ENCODE measurements at regions of chr12 and their contacts with region 1.

Region 1: DNA sequence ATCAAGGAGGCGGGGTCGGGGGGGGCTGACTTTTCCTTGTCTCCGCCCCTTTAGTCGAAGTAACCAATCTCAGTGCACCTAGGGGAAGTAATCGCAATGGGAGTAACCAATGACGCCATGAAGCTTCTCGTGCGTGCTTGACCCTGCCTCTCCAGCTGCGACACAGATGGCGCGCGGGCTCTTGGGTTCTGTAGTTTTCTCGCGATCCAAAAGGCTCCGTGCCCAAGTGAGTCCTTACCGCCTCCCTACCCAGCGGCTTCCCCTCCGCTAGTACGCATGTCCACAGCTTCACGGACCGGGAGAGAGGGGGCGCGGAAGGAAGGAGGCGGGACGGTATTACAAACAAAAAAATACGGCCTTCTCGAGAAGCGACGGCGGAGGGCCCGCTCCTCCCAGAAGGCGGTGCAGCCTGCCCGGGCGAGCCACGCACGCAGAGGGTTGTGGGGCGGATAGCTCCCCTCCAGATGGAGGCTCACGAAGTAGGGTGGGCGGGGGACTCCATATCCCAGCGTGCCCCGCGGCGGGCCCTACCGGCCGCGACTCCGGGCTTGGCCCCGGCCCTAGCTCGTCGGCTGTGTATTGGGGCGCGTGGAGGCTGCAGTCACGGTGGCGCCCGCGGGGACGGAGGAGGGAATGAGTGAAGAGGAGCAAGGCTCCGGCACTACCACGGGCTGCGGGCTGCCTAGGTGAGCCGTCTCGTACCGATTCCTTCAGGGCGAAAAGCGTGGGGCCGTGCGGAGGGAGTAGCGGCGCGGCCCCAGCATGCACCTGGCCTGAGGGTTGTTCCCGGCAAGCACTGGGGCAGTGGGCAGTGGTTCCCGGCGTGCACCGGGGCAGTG is at the start of gene TARBP2:
- DNase-seq: peak; percentile 97
- H3K4me3 Mint-ChIP-seq: peak within 1 kb of the TSS; percentile 81
- H3K27ac Mint-ChIP-seq: peak within 1 kb of the TSS; percentile 96
- H3K4me1 Mint-ChIP-seq: peaks cover 41% of the 10 kb centered on the region
- H3K27me3 Mint-ChIP-seq: no peaks in the 10 kb centered on the region
- total RNA-seq, gene TARBP2: 25.0 to 26.8 TPM

Region 2: GRCh38 chr12:53098982-53099651 is 401.9 kb before region 1 on chr12:
- CTCF ChIA-PET with region 1: no interaction called
- intact Hi-C with region 1: loop called (anchors 5 kb)
- DNase-seq: peak; percentile 95
- H3K4me3 Mint-ChIP-seq: peak overlapping the region; percentile 44
- H3K27ac Mint-ChIP-seq: no peak overlapping the region
- H3K4me1 Mint-ChIP-seq: peaks cover 40% of the 10 kb centered on the region
- H3K27me3 Mint-ChIP-seq: peaks cover 6% of the 10 kb centered on the region

Region 3: DNA sequence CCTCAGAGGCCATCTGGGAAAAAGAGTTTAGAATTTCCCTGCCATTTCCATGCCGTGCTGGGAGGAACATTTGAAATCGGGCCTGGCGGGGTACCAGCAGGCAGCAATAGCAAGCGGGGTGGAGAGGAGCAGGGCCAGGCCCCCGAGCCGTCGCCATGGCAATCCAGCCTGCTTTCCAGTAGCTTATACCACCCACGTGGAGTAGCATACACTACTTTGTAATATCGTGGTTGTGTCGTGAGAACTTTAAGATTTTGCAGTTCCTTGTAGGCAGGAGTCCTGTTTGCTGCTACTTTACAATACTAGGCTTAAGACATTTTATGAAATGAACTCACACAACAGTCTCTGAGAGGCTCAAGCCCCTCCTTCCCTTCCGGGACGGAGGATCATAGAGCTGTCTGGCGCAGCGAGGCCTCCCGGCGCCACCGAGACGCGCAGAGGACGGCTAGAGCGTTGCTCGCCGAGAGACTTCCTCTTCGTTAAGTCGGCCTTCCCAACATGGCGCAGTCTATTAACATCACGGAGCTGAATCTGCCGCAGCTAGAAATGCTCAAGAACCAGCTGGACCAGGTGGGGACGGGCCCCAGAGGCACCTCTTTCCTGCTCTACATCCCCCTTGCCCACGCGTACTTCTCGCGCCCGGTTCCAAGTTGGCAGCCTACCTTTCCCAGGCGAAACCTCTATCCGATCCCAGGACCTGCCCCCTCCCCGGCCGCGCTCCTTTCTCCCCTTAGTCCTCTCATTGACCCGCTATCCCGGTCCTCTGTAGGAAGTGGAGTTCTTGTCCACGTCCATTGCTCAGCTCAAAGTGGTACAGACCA is 205.7 kb before region 1 on chr12 and contains the start of gene PFDN5:
- CTCF ChIA-PET with region 1: no interaction called
- intact Hi-C with region 1: loop called (anchors 1 kb)
- DNase-seq: peak; percentile 94
- H3K4me3 Mint-ChIP-seq: peak within 1 kb of the TSS; percentile 98
- H3K27ac Mint-ChIP-seq: peak within 1 kb of the TSS; percentile 95
- H3K4me1 Mint-ChIP-seq: peaks cover 53% of the 10 kb centered on the region
- H3K27me3 Mint-ChIP-seq: no peaks in the 10 kb centered on the region
- total RNA-seq, gene PFDN5: 376 to 383 TPM

Region 4: GRCh38 chr12:53414756-53415417 is 86.1 kb before region 1 on chr12:
- CTCF ChIA-PET with region 1: no interaction called
- intact Hi-C with region 1: loop called (anchors 2 kb)
- DNase-seq: no peak
- H3K4me3 Mint-ChIP-seq: no peak overlapping the region
- H3K27ac Mint-ChIP-seq: no peak overlapping the region
- H3K4me1 Mint-ChIP-seq: peaks cover 74% of the 10 kb centered on the region
- H3K27me3 Mint-ChIP-seq: no peaks in the 10 kb centered on the region

Region 5: DNA sequence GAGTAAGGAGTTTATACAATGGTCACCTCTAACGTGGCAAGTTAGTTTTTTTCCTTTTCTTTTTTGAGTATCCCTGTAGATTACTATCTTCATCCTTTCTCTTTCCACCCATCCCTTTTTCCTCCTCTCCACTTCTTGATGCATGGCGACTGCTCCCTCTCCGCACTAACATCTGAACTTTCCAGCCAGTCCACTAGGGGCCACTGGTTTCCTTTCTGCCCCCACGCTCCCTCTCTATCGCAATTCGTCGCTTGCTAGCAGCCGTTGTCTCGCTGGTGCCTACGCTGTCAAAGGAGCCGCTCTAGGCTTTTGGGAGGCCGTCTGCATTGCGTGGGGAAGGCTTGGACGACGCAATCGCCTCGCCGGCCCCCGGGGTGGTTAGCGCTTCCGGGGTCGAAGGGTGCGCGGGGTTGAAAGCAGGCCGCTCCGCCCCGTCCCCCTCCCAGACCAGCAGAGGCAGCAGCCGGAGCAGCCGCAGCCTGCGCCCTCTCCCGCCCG is 49.3 kb before region 1 on chr12 and contains the start of gene PCBP2:
- CTCF ChIA-PET with region 1: interaction called, 5 read pairs
- intact Hi-C with region 1: loop called (anchors 1 kb)
- DNase-seq: peak; percentile 99
- H3K4me3 Mint-ChIP-seq: peak within 1 kb of the TSS; percentile 99
- H3K27ac Mint-ChIP-seq: peak within 1 kb of the TSS; percentile 99
- H3K4me1 Mint-ChIP-seq: peaks cover 36% of the 10 kb centered on the region
- H3K27me3 Mint-ChIP-seq: no peaks in the 10 kb centered on the region
- total RNA-seq, gene PCBP2: 1,085 to 1,132 TPM

Region 6: DNA sequence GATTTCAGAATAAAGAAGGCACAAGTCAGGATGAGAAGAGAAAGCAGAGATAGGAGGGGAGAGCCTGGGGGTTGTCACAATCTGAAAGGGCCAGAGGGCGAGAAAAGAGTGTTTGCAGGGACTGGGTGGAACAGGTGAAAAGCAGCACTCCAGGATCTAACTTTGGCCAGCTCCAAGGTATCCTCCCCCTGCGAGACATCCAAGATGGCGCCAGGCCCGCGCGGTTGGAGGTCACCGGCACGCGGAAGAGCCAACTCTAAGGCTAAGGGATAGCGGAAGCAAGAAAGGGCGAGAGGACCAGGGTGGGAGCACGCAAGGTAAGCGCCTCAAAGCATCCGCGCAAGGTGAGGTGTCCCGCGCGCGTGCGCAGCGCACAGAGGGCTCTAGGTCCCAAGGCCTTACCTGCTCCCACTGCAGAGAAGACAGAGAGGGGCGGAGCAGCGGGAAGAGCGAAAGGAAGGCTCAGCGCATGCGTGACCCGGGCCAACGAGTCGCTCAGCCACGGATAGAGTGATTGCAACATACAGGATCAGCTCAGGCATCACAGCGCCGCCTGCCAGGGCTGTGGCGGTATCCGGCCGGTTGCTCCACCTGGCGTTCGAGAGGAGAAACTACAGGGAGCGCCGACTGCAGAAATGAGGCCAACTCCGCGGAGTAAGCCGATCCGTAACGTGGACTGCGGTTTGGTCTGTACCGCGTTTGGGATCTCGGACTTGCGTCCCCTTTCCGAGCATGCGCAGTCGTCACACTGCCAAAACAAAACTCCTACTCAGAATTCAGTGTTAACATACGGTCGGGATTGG is 174.9 kb after region 1 on chr12 and contains the start of gene ATP5MC2:
- CTCF ChIA-PET with region 1: interaction called, 4 read pairs
- intact Hi-C with region 1: loop called (anchors 1 kb)
- DNase-seq: peak; percentile 98
- H3K4me3 Mint-ChIP-seq: peak within 1 kb of the TSS; percentile 95
- H3K27ac Mint-ChIP-seq: peak within 1 kb of the TSS; percentile 91
- H3K4me1 Mint-ChIP-seq: peaks cover 32% of the 10 kb centered on the region
- H3K27me3 Mint-ChIP-seq: peaks cover 13% of the 10 kb centered on the region
- total RNA-seq, gene ATP5MC2: 443 to 466 TPM